IMR-90 (cell line): ENCODE measurements at regions of chr16 and their contacts with region 1.

Region 1: DNA sequence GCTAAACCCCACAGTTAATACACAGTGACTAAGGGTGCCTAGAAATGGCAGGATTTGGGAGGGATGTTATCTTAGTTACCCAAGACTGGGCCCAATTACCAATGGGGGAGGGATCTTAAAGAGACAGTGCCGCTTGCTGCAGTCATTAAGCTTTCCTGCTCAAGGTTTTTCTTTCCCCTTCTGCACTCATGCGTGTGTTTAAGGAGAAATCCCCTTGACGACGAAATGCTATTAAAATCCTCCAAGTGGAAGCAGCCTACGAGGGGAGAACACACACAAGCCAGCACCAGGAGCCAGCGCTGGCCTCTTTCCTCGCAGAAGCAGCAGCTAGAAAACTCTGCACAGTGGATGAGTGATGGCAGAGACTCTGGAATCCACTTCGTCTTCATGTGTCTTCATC is 22.0 kb downstream of the SALL1 start:
- DNase-seq: peak; percentile 2
- ATAC-seq: 0 out of 2 replicates have a peak, but pooled peaks have one; percentile 42
- H3K4me3 ChIP-seq: no peak overlapping the region
- H3K27ac ChIP-seq: no peak overlapping the region
- H3K4me1 ChIP-seq: peaks cover 4% of the 10 kb centered on the region; the same call in 1 of the 2 replicates
- H3K27me3 ChIP-seq: peaks cover 22% of the 10 kb centered on the region
- CTCF ChIP-seq: no peak
- POLR2A ChIP-seq: no peak
- RAD21 ChIP-seq: no peak

Region 2: GRCh38 chr16:51621610-51622009 is 492.5 kb after region 1 on chr16:
- CTCF ChIA-PET with region 1: no interaction called
- POLR2A ChIA-PET with region 1: interaction called, 10 read pairs
- dilution Hi-C with region 1: no loop called
- in situ Hi-C with region 1: no loop called
- intact Hi-C with region 1: no loop called
- DNase-seq: no peak
- ATAC-seq: no peak
- H3K4me3 ChIP-seq: no peak overlapping the region
- H3K27ac ChIP-seq: no peak overlapping the region
- H3K4me1 ChIP-seq: no peaks in the 10 kb centered on the region
- H3K27me3 ChIP-seq: no peaks in the 10 kb centered on the region
- CTCF ChIP-seq: no peak
- POLR2A ChIP-seq: no peak
- RAD21 ChIP-seq: no peak